ENCODE measurements at regions of chr3 and their contacts with region 1.

Region 1: DNA sequence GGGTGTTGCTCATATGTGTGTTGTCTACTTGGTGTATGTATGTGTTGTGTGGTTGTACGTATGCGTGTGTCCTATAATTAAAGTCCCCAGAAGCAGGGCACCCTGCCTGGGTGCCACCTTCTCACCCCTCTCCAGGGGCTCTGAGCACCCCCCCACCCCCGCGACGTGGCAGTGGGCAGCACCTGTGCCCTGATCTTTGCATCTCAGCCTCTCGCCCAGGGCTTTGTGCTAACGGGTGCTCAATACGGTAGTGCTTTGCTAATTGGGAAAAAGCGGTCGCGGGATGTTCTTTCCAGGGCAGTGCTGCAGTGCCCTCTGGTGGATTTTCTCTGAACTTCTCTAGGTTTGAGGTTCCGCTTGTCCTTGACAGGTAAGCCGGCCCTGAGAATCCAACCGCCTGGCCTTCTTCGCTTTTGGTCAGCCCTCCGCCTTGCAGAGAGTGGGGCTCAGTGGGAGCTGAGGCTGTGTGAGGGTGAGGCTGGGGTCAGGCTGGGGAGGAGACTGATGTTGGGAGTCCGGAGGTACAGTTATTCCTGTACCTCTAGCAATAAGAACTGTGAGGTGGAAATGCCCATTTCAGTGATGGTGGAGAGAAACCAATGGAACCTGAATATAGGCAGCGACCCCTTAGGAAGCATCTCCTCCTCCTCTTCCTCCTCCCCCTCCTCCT is 17.6 kb upstream of the EPHB3 start:
- DNase-seq: peak; percentile 61 to 92 (median 61)
- ATAC-seq: peak; percentile 80
- H3K4me3 ChIP-seq: no peak overlapping the region
- H3K4me1 ChIP-seq: peaks cover 5% of the 10 kb centered on the region
- CTCF ChIP-seq: peak; percentile 88

Region 2: DNA sequence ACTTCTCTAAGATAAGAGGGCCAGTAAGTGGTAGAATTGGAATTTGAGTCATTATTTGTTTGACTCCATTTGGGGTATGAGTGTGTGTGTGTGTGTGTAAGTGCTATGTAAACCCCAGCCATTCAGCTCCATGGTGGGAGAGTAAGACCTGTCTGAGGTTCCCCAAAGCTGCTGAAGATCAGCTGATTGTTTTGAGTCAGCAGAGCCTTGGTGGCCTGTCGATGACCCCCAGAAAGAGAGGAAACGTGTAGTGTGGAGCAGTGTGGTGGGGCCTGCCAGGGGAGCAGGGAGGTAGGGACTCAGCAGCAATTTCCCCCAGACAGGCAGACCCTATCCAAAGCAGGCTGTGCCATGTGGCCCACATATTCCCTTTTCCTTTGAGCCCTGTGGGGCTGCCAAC is 383.5 kb before region 1 on chr3:
- intact Hi-C with region 1: no loop called
- DNase-seq: no peak
- ATAC-seq: no peak
- H3K4me3 ChIP-seq: no peak overlapping the region
- H3K4me1 ChIP-seq: peaks cover 17% of the 10 kb centered on the region
- CTCF ChIP-seq: no peak

Region 3: GRCh38 chr3:184371570-184372018 is 172.4 kb before region 1 on chr3:
- intact Hi-C with region 1: loop called in 1 of 2 experiments (anchors 5 kb)
- DNase-seq: peak; percentile 75 to 81 (median 79)
- ATAC-seq: peak; percentile 96
- H3K4me3 ChIP-seq: no peak overlapping the region
- H3K4me1 ChIP-seq: no peaks in the 10 kb centered on the region
- CTCF ChIP-seq: peak; percentile 89

Region 4: DNA sequence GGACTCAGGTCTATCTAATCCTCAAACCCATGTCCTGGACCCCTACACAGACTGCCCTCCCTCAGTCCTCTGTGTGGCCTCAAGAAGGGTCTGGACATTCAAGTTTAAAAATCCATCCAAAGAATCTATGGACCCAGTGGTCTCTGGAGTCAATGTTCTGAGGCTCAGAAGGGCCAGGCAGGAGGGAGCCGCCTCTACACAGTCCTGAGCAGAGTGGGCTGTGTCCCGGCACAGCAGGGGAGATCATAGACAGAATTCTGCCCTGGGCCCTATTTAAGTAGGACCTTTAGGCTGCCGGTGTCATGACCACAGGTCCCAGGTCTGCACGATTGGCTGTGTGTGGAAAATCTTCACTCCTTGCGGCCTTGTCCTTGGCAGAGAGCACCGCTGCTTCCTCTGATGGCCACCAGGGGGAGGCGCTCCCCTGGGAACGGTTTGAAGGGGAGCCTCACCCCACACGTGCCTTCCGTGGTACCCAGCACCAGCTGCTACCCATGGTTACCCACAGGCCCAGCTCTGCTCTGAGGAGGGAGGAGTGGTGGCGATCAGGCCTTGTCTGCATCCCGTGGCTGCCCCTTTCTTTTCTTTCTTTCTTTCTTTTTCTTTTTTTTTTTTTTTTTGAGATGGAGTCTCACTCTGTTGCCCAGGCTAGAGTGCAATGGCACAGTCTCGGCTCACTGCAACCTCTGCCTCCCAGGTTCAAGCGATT is 126.2 kb before region 1 on chr3:
- intact Hi-C with region 1: loop called in 1 of 2 experiments (anchors 5 kb)
- DNase-seq: peak; percentile 64 to 82 (median 81)
- ATAC-seq: peak; percentile 95
- H3K4me3 ChIP-seq: no peak overlapping the region
- H3K4me1 ChIP-seq: no peaks in the 10 kb centered on the region
- CTCF ChIP-seq: peak; percentile 81

Measured in mucosa of descending colon (tissue), 3 donors.